Gastrocnemius medialis (tissue), 4 donors: ENCODE measurements at regions of chr1 and their contacts with region 1.

Region 1: DNA sequence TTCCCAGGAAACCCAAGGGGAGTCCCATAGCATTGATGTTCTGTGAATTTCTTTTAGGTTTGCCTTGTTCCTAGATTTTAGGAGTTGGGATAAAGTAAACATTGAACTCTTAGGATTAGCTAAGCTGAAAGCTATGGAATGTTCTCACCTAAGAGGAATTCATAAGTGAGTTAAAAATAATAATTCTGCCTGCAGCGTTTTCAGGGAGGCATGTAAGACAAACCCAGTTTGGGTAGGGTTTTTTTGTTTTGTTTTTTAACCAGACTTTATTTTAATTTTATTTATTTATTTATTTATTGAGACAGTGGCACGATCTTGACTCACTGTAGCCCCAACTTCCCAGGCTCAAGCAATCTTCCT is 28.9 kb upstream of the CD101 start:
- DNase-seq: no peak
- ATAC-seq: no peak
- H3K4me3 ChIP-seq: no peak overlapping the region
- H3K27ac ChIP-seq: no peak overlapping the region
- H3K4me1 ChIP-seq: no peaks in the 10 kb centered on the region
- H3K27me3 ChIP-seq: no peaks in the 10 kb centered on the region
- CTCF ChIP-seq: no peak
- POLR2A ChIP-seq: no peak

Region 2: DNA sequence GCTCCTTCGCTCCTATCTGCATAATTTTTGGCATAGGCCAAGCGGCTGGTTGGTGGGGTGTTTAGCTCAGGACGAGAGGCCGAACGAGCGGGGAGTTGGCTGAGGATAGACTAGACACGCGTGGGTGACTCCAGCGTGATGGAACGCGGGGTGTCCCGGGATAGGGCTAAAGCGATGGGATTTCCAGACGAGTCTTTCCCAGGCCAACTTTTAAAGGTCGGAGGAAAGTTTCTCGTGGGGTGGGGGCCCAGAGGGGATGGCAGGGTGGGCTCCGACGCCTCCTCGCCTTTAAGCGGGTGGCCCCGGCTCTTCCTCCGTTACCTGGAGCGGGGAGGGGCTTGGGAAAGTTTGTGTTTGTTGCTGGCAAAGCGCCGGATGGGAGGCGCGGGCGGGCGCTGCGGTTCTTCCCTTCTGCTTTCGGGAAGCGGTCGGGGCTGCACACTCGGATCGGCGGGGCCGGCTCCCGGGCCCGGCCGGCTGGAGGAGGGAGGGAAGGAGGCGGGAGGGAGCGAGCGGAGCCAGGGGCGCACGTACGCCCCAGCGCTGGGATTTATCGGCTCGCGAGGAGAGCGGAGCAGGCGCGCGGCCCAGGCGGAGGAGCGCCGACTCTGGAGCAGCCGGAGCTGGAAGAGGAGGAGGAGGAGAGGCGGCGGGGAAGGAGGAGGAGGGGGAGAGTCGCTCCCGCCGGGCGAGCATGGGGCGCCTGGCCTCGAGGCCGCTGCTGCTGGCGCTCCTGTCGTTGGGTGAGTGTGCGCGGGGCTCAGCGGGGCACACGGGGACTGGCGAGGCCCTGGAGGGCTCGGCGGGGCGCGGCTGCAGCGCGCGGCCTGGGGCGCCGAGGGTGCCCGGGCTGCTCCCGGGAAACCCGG is 62.9 kb before region 1 on chr1 and contains the start of gene PTGFRN:
- in situ Hi-C with region 1: no loop called
- intact Hi-C with region 1: no loop called
- DNase-seq: peak in 1 of 2 donors; percentile 23
- ATAC-seq: peak; percentile 65
- H3K4me3 ChIP-seq: peak within 1 kb of the TSS; percentile 55 to 66 (median 60)
- H3K27ac ChIP-seq: peak within 1 kb of the TSS; percentile 35 to 48 (median 44)
- H3K4me1 ChIP-seq: no peaks in the 10 kb centered on the region
- H3K27me3 ChIP-seq: peaks cover 9 to 37% (median 12%) of the 10 kb centered on the region in 3 donors
- CTCF ChIP-seq: no peak
- POLR2A ChIP-seq: no peak
- total RNA-seq, gene PTGFRN: 1.5 to 18.1 (median 2.9) TPM

Region 3: GRCh38 chr1:116943438-116943837 is 29.2 kb before region 1 on chr1:
- in situ Hi-C with region 1: no loop called
- intact Hi-C with region 1: no loop called
- DNase-seq: no peak
- ATAC-seq: no peak
- H3K4me3 ChIP-seq: no peak overlapping the region
- H3K27ac ChIP-seq: no peak overlapping the region
- H3K4me1 ChIP-seq: peaks cover 0 to 6% of the 10 kb centered on the region in 2 donors
- H3K27me3 ChIP-seq: no peaks in the 10 kb centered on the region
- CTCF ChIP-seq: no peak
- POLR2A ChIP-seq: no peak

Region 4: GRCh38 chr1:117015719-117016118 is 43.1 kb after region 1 on chr1:
- in situ Hi-C with region 1: no loop called
- intact Hi-C with region 1: loop called (anchors 1 kb)
- DNase-seq: no peak
- ATAC-seq: no peak
- H3K4me3 ChIP-seq: no peak overlapping the region
- H3K27ac ChIP-seq: no peak overlapping the region
- H3K4me1 ChIP-seq: no peaks in the 10 kb centered on the region
- H3K27me3 ChIP-seq: no peaks in the 10 kb centered on the region
- CTCF ChIP-seq: no peak
- POLR2A ChIP-seq: no peak